ENCODE measurements at regions of chrX and their contacts with region 1.

Region 1: GRCh38 chrX:56978172-56978571 is 17.2 kb downstream of the SPIN3 start:
- DNase-seq: peak in 27 of 35 experiments; percentile 2 to 70 (median 25)
- ATAC-seq: peak; percentile 69 to 93 (median 89)
- H3K4me3 ChIP-seq: no peak overlapping the region
- H3K4me3 Mint-ChIP-seq: no peak overlapping the region
- H3K27ac ChIP-seq: no peak overlapping the region
- H3K27ac Mint-ChIP-seq: no peak overlapping the region
- H3K4me1 ChIP-seq: no peaks in the 10 kb centered on the region
- H3K4me1 Mint-ChIP-seq: peaks cover 0 to 6% (median 2%) of the 10 kb centered on the region in 3 donors
- H3K27me3 ChIP-seq: no peaks in the 10 kb centered on the region
- H3K27me3 Mint-ChIP-seq: peaks cover 0 to 4% of the 10 kb centered on the region in 2 donors

Region 2: GRCh38 chrX:56764153-56764974 is 213.8 kb before region 1 on chrX:
- CTCF ChIA-PET with region 1: interaction called in 1 of 2 experiments, 10 read pairs
- POLR2A ChIA-PET with region 1: no interaction called
- DNase-seq: peak; percentile 42 to 90 (median 68)
- ATAC-seq: peak; percentile 19 to 64 (median 58)
- H3K4me3 ChIP-seq: peak overlapping the region; percentile 24 to 52
- H3K4me3 Mint-ChIP-seq: peak overlapping the region; percentile 67 to 92 (median 88)
- H3K27ac ChIP-seq: peak overlapping the region; percentile 64
- H3K27ac Mint-ChIP-seq: peak overlapping the region; percentile 91 to 97
- H3K4me1 ChIP-seq: peaks cover 42 to 51% of the 10 kb centered on the region in 2 experiments
- H3K4me1 Mint-ChIP-seq: peaks cover 56 to 67% (median 60%) of the 10 kb centered on the region in 3 donors
- H3K27me3 ChIP-seq: no peaks in the 10 kb centered on the region
- H3K27me3 Mint-ChIP-seq: no peaks in the 10 kb centered on the region

Measured in T-cell (primary cell).